Colonic mucosa (tissue), 4 donors: ENCODE measurements at regions of chr1 and their contacts with region 1.

Region 1: GRCh38 chr1:159207774-159208173 is 3.1 kb downstream of the ACKR1 start:
- DNase-seq: no peak
- H3K4me3 ChIP-seq: no peak overlapping the region
- H3K27ac ChIP-seq: no peak overlapping the region
- H3K4me1 ChIP-seq: no peaks in the 10 kb centered on the region
- H3K27me3 ChIP-seq: no peaks in the 10 kb centered on the region
- CTCF ChIP-seq: no peak

Region 2: DNA sequence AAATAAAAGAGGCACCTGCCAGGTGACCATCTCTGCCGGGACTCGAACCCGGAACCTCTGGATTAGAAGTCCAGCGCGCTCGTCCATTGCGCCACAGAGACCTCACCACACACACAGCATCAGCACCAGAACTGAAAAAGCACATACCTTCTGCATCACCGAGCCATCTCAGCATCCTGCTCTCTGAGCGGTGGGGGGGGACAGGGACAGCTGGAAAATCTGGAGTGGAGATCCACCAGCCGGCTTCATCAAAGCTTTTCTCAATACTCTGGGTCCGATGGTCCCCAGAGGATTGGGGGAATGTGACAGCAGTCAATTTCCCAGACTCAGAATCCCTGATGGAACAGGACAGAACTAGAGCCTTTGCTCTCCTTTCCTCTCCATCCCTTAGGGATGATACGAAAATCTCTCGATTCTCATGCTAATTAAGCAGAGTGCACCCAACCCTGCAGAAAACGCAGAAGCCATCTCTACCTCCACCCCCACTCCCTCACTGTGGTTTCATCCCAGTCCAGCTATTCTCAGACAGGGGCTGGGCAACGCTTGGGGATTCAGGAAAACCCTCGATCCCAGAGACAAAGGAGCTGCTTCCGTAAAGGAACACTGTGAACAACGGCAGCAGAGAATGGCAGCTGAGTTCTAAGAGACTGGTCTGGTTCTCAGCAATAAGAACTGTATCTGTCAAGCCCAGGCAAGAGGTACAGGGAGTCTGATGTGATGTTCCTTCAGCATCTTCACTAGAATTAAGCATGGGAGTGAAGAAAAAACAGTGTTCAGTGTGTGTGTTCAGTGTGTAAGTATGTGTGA is 66.0 kb before region 1 on chr1:
- intact Hi-C with region 1: no loop called
- DNase-seq: no peak
- H3K4me3 ChIP-seq: no peak overlapping the region
- H3K27ac ChIP-seq: no peak overlapping the region
- H3K4me1 ChIP-seq: no peaks in the 10 kb centered on the region
- H3K27me3 ChIP-seq: no peaks in the 10 kb centered on the region
- CTCF ChIP-seq: no peak

Region 3: DNA sequence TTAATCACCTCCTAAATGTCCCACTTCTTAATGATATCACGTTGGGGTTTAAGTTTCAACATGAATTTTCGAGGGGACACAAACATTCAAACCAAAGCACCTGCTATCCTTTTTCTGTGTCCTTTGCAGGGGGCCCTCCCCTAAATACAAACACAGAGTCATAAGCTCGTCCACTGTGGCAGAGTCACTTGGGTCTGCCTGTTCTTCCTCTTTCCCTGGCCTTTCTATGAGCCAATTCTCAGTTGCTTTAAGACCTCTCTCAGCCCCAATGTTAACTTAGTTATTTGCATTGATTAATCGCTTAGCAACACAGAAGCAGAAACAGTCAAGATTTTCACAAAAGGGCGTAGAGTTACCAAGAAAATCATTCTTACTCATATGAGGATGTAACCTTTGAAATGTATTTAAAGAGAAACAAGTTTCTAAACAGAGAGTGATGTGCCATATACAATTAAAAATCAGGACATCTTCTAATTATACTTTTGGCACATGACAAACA is 394.8 kb after region 1 on chr1:
- intact Hi-C with region 1: no loop called
- DNase-seq: no peak
- H3K4me3 ChIP-seq: no peak overlapping the region
- H3K27ac ChIP-seq: no peak overlapping the region
- H3K4me1 ChIP-seq: no peaks in the 10 kb centered on the region
- H3K27me3 ChIP-seq: no peaks in the 10 kb centered on the region
- CTCF ChIP-seq: no peak

Region 4: GRCh38 chr1:159780583-159781582 is 573.1 kb after region 1 on chr1 and contains the start of gene DUSP23:
- intact Hi-C with region 1: loop called (anchors 10 kb)
- DNase-seq: peak; percentile 98
- H3K4me3 ChIP-seq: peak within 1 kb of the TSS; percentile 95
- H3K27ac ChIP-seq: peak within 1 kb of the TSS; percentile 77
- H3K4me1 ChIP-seq: peaks cover 4% of the 10 kb centered on the region
- H3K27me3 ChIP-seq: no peaks in the 10 kb centered on the region
- CTCF ChIP-seq: peak; percentile 89
- total RNA-seq, gene DUSP23: 43.3 to 50.4 TPM